ENCODE measurements at regions of chr9 and their contacts with region 1.

Region 1: GRCh38 chr9:6008169-6008979 is 7.0 kb downstream of the RANBP6 start:
- DNase-seq: peak; percentile 82
- ATAC-seq: peak; percentile 75
- H3K4me3 Mint-ChIP-seq: peak overlapping the region; percentile 85
- H3K27ac Mint-ChIP-seq: peak overlapping the region; percentile 87
- H3K4me1 Mint-ChIP-seq: peaks cover 57% of the 10 kb centered on the region
- H3K27me3 Mint-ChIP-seq: no peaks in the 10 kb centered on the region
- CTCF ChIP-seq: no peak

Region 2: GRCh38 chr9:4792572-4793458 is 1215.6 kb before region 1 on chr9 and contains the start of gene RCL1:
- CTCF ChIA-PET with region 1: no interaction called
- POLR2A ChIA-PET with region 1: interaction called, 3 read pairs
- intact Hi-C with region 1: loop called (anchors 2 kb)
- DNase-seq: peak; percentile 97
- ATAC-seq: peak; percentile 93
- H3K4me3 Mint-ChIP-seq: peak within 1 kb of the TSS; percentile 97
- H3K27ac Mint-ChIP-seq: peak within 1 kb of the TSS; percentile 96
- H3K4me1 Mint-ChIP-seq: peaks cover 40% of the 10 kb centered on the region
- H3K27me3 Mint-ChIP-seq: peaks cover 2% of the 10 kb centered on the region
- CTCF ChIP-seq: no peak
- total RNA-seq, gene RCL1: 23.9 and 26.0 TPM in 2 replicates

Region 3: DNA sequence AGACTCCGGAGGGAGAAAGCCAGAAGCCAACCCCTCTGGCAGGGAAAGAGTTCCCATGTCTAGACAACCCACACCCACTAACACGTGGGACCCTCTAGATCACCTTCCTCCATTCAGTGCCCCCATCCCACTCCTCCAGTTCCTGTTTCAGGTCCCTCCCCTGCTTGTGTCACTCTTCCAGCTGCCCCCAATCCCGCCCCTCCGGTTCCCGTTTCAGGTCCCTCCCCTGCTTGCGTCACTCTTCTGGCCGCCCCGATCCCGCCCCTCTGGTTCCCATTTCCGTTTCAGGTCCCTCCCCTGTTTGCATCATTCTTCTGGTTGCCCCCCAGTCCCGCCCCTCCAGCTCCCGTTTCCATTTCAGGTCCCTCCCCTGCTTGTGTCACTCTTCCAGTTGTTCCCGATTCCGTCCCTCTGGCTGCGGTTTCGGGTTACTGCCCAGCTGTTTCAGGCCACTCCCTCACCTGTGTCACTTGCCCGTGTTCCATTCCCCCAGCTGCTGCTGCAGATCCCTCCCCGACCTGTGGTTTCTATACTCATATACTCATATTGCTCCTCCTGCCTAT is 71.9 kb after region 1 on chr9:
- CTCF ChIA-PET with region 1: no interaction called
- POLR2A ChIA-PET with region 1: no interaction called
- intact Hi-C with region 1: loop called (anchors 1 kb)
- DNase-seq: peak; percentile 60
- ATAC-seq: peak; percentile 98
- H3K4me3 Mint-ChIP-seq: peak overlapping the region; percentile 93
- H3K27ac Mint-ChIP-seq: peak overlapping the region; percentile 93
- H3K4me1 Mint-ChIP-seq: peaks cover 12% of the 10 kb centered on the region
- H3K27me3 Mint-ChIP-seq: peaks cover 7% of the 10 kb centered on the region
- CTCF ChIP-seq: no peak